WTC11 (cell line): ENCODE measurements at regions of chr2 and their contacts with region 1.

Region 1: GRCh38 chr2:219278655-219279516 is at the start of gene DNAJB2:
- DNase-seq: peak; percentile 97
- ATAC-seq: peak; percentile 81
- H3K4me3 Mint-ChIP-seq: peak within 1 kb of the TSS; percentile 88
- H3K27ac Mint-ChIP-seq: peak within 1 kb of the TSS; percentile 96
- H3K4me1 Mint-ChIP-seq: peaks cover 32% of the 10 kb centered on the region
- H3K27me3 Mint-ChIP-seq: peaks cover 5% of the 10 kb centered on the region; the same call in 1 of the 2 replicates
- CTCF ChIP-seq: no peak
- total RNA-seq, gene DNAJB2: 36.1 to 42.8 TPM (median 40.3 TPM) in 3 replicates

Region 2: GRCh38 chr2:219245148-219245898 is 33.6 kb before region 1 on chr2 and contains the starts of genes GLB1L and STK16:
- CTCF ChIA-PET with region 1: interaction called, 25 read pairs
- POLR2A ChIA-PET with region 1: interaction called, 7 read pairs
- DNase-seq: peak; percentile 96
- ATAC-seq: peak; percentile 84
- H3K4me3 Mint-ChIP-seq: peak within 1 kb of the TSS; percentile 93
- H3K27ac Mint-ChIP-seq: peak within 1 kb of the TSS; percentile 96
- H3K4me1 Mint-ChIP-seq: peaks cover 22% of the 10 kb centered on the region
- H3K27me3 Mint-ChIP-seq: no peaks in the 10 kb centered on the region
- CTCF ChIP-seq: no peak
- total RNA-seq, gene GLB1L: 5.2 to 6.4 TPM (median 6.1 TPM) in 3 replicates
- total RNA-seq, gene STK16: 27.4 to 28.8 TPM (median 27.5 TPM) in 3 replicates

Region 3: DNA sequence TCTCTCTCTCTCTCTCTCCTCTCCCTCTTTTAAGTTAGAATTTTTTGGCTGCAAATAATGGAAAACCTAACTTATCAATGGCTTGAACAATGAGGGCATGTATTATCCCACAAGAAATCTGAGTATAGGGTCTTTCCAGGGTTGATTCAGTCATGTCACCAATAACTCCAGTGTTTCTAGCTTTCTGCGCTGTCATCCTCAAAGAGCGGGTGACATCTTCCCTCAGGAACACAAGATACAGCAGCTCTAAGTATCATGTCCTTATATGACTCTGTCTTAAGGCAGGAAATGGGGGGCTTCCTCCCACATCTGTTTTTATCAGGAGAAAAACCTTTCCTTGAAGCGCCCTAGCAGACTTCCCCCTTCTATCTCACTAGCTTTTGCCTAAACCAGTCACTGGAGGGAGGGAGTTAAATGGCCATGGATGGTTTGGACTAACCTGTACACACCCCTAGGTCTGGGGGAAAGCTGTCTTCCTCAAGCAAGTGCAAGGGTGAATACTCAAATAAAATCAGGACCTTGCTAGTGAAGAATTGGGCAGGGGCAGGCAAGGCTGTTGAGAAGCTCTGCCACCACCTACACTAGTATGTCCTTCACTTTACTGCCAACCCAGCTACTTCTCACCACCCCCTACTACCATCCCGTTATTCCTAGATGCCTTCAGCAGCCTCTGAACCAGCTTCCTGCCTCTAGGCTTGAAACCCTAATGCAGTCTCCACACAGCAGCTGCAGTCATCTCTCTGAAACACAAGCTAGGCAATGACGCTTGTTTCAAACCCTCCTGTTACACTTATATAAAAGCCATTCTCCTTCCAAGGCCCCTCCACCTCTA is 17.6 kb before region 1 on chr2:
- CTCF ChIA-PET with region 1: interaction called, 20 read pairs
- POLR2A ChIA-PET with region 1: interaction called, 3 read pairs
- DNase-seq: no peak
- ATAC-seq: no peak
- H3K4me3 Mint-ChIP-seq: no peak overlapping the region
- H3K27ac Mint-ChIP-seq: no peak overlapping the region
- H3K4me1 Mint-ChIP-seq: no peaks in the 10 kb centered on the region
- H3K27me3 Mint-ChIP-seq: peaks cover 56% of the 10 kb centered on the region
- CTCF ChIP-seq: no peak

Region 4: DNA sequence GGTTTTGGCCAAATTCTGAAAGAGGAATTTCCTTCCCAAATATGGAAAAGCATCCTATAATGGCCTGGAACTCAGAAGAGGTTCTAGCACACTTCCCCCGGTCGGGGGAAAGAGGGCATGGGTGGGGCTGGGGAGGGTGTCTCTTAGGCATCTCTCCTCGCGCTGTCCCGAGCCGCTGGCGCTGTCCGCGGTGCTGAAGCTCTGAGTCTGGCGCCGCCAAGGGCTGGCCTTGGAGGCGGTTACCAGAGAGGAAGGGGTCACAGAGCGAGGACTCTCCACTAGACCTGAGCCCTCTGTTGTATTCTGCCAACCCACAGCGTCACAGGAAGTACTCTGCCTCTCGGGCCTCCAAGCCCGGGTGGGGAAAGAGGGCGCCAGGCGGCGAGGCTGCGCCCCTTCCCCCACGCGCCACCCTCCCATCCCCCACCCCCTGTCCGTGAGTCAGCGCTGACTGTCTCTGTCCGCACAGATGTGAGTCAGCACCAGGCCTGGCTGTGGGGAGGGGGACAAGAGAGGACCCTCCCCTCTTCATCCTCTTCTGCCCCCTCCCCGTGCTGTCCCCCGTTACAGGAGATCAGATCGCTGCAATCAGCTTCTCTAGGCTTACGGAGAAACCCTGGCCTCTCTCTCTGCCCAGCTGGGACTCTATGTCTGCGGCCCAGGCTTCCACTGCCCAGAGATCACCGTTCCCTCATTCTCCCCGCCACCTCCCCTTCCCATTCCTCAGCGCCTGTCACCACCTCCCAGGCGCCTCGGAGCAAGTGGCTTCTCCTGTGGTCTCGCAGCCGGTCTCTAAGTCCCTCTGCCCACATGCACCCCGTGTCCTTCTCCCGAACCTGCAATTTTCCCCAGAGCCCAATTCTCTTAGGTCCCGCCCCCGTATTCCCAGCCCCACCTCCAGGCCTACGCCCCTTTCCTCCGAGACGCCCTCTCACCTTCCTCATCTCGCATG is 29.5 kb after region 1 on chr2:
- CTCF ChIA-PET with region 1: interaction called, 10 read pairs
- POLR2A ChIA-PET with region 1: interaction called, 3 read pairs
- DNase-seq: peak; percentile 94
- ATAC-seq: peak; percentile 75
- H3K4me3 Mint-ChIP-seq: peak overlapping the region; percentile 85
- H3K27ac Mint-ChIP-seq: no peak overlapping the region
- H3K4me1 Mint-ChIP-seq: peaks cover 22% of the 10 kb centered on the region
- H3K27me3 Mint-ChIP-seq: peaks cover 63% of the 10 kb centered on the region
- CTCF ChIP-seq: no peak